AG04449 (cell line): ENCODE measurements at regions of chr3 and their contacts with region 1.

Region 1: DNA sequence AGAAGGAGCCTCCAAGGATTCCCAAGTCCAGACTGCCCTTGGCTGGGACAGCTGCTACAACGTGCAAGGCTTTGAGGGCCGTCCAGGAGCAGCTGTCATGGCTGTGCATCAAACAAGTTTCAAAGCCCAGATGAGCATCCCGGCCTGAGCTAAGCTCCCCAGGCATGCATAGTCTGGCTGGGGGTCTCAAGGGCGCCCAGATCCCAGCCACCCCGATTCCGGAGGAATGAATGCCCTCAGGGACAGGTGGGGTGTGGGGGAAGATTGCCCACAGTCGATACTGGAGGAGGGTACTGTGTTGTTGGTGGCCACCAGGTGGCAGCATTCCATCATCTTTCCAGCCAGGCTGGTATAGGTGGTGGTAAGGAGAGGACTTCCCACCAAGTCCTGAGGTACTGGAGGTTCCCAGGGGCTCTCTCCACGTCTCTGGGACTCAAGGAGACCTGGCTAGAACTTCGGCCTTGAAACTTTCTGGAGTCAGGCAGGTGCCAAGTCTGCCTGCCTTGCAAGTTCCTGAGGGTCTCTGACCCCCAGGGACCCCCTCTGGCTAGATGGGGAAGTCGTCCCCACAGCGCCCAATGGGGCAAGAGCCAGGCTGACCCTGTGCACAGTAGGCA is 32.8 kb downstream of the RBM5 start:
- DNase-seq: peak; percentile 21
- H3K4me3 ChIP-seq: no peak overlapping the region
- CTCF ChIP-seq: peak; percentile 79

Region 2: DNA sequence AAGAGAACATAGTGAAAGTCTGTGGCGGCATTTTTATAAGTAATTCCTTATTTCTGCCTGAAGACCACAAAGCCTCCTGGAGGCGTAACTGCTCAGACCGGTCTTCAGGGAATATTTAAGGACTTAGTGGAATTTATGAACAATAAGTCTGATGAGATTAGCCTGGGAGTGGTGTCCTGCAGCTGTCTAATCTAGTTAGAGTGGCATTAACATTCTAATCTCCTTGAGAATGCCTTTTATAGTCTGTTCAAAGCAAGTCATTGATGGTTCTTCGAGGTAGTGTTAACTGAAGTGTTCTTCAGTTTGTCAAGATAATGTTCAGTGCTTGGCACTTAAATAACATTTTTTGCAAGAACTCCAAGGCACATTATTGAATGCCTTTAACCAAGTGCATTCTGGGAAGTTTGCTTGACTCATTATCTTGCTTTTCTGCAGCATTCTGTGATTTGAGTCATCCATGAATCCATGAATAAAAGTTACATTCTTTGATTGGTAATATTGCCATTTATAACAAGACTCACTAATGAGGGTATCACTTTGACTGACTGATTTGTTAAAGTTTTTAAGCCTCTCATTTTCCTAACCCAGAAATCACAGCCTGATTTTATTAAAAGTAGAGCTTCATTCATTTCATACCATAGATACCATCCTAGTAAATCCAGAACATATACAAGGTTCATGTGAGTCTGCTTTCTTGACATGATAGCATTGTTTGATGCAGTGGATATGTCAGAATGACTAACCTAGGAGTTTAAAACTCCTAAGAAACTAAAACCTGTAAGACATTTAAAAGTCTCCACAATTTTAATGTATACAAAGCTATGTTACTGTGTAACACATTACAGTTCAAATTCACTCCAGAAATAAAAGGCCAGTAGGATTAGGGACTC is 20.3 kb before region 1 on chr3:
- CTCF ChIA-PET with region 1: interaction called, 29 read pairs
- POLR2A ChIA-PET with region 1: no interaction called
- DNase-seq: peak; percentile 29
- H3K4me3 ChIP-seq: no peak overlapping the region
- CTCF ChIP-seq: no peak

Region 3: GRCh38 chr3:50138266-50139200 is 17.0 kb after region 1 on chr3:
- CTCF ChIA-PET with region 1: interaction called, 76 read pairs
- POLR2A ChIA-PET with region 1: interaction called, 4 read pairs
- DNase-seq: no peak
- H3K4me3 ChIP-seq: no peak overlapping the region
- CTCF ChIP-seq: no peak

Region 4: DNA sequence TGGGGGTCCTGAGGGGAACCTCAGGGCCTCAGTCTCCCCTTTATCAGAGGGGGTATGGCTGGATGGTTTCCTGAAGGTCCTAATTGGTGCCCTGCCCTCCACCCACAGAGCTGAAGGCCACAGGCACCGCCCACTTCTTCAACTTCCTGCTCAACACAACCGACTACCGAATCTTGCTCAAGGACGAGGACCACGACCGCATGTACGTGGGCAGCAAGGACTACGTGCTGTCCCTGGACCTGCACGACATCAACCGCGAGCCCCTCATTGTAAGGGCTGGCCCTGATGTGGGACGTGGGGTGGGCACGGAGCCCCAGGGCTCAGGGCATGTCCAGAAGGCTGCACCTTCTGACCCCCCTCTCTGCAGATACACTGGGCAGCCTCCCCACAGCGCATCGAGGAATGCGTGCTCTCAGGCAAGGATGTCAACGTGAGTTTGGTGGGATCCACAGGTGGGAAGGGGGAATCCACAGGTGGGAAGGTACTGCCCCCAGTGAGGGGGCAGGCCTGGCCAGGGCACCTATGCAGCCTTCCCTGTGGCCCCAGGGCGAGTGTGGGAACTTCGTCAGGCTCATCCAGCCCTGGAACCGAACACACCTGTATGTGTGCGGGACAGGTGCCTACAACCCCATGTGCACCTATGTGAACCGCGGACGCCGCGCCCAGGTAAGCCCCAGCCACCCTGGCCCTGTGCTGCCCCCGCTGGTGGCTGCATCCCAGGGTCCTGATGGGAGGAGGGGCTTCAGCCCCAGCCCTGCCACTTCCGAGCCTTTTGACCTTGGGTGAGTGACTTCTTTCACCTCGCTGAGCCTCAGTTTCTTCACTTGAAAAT is 52.4 kb after region 1 on chr3:
- CTCF ChIA-PET with region 1: interaction called, 817 read pairs
- POLR2A ChIA-PET with region 1: no interaction called
- DNase-seq: no peak
- H3K4me3 ChIP-seq: no peak overlapping the region
- CTCF ChIP-seq: no peak

Region 5: DNA sequence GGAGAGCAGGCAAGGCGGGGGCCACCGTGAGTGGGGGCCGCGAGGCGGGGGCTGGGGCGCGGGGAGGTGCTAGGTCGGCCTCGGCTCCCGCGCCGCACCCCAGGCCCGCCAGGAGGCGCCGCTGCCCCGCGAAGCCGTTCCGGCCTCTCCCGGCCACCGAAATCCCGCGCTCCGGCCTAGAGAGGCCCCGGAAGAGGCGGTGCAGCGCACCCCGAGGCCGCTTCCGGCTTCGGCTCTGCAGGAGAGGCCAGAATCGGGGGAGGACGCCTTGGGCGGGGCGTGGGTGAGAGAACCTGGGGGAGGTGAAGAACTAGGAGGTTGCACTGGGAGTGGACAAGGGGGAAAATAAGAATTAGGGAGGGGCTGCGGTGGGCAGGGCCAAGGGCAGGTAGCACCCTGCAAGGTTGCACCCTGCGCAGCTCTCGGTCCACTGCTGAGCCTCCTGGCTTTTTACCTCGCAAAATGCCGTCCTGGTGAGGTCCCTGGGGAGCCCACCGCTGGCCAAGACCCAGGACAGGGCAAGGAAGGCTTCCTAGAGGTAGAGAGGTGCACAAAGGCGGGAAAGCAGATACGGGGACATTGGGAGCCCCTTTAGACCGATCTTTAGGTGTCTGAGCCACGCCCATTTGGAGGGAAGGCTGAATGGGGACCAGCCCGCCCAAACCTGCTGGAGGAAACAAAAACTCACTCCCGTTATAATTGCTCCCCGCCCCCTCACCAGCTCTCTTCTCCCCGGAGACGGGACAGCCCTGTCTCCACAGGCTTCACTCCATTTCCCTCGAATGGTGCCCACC is 106.1 kb after region 1 on chr3:
- CTCF ChIA-PET with region 1: interaction called, 38 read pairs
- POLR2A ChIA-PET with region 1: no interaction called
- DNase-seq: no peak
- H3K4me3 ChIP-seq: peak overlapping the region; percentile 80
- CTCF ChIP-seq: peak; percentile 78

Region 6: GRCh38 chr3:50304601-50305000 is 183.1 kb after region 1 on chr3:
- CTCF ChIA-PET with region 1: no interaction called
- POLR2A ChIA-PET with region 1: no interaction called
- DNase-seq: no peak
- H3K4me3 ChIP-seq: no peak overlapping the region
- CTCF ChIP-seq: no peak